ENCODE measurements at regions of chr22 and their contacts with region 1.

Region 1: GRCh38 chr22:17171313-17172171 is 12.5 kb upstream of the HDHD5 start:
- DNase-seq: peak; percentile 74
- H3K4me3 ChIP-seq: peak overlapping the region; percentile 72
- H3K27ac ChIP-seq: peak overlapping the region; percentile 81
- H3K27me3 ChIP-seq: no peaks in the 10 kb centered on the region
- CTCF ChIP-seq: peak; percentile 93

Region 2: DNA sequence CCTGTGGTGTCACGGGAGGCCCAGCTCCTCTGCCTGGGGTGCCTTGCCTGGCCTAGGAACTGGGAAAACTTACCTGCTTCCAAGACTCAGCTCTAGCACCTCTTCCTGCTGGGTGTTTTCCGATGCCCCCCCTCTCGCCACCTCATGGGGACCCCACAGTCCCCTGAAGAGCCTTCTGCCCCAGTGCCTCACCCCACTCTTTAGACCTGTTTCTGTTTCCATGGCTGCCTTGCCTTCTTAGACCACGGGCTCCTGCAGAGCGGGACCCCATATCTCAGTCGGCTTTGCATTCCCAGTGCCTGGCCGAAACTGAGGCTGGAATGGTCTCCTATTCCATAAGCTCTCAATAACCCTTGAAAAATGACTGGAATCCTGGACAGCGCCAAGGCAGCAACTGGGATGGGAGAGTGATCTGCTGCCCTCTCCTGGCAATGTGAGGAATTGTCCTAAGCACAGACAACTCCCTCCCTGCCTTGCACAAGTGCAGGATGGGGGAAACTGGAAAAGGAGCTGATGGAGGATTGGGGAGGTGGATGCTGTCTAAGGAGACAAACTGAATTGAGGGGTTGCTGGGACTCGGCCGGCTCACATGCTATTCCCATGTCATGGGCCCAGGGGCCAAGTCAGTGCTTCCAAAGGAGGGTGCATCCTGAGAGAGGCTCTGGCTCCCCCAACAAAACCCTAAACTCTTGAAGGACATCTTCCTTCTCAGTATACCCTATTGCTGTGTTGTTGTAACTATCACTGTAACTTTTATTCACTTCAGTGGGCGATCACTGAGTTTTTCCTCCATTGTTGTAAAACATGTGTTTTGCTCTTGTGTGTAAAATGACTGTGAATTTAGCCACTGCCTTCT is 113.4 kb before region 1 on chr22:
- CTCF ChIA-PET with region 1: interaction called, 11 read pairs
- POLR2A ChIA-PET with region 1: interaction called, 3 read pairs
- DNase-seq: peak; percentile 46
- H3K4me3 ChIP-seq: no peak overlapping the region
- H3K27ac ChIP-seq: no peak overlapping the region
- H3K27me3 ChIP-seq: peaks cover 5% of the 10 kb centered on the region
- CTCF ChIP-seq: peak; percentile 97

Region 3: DNA sequence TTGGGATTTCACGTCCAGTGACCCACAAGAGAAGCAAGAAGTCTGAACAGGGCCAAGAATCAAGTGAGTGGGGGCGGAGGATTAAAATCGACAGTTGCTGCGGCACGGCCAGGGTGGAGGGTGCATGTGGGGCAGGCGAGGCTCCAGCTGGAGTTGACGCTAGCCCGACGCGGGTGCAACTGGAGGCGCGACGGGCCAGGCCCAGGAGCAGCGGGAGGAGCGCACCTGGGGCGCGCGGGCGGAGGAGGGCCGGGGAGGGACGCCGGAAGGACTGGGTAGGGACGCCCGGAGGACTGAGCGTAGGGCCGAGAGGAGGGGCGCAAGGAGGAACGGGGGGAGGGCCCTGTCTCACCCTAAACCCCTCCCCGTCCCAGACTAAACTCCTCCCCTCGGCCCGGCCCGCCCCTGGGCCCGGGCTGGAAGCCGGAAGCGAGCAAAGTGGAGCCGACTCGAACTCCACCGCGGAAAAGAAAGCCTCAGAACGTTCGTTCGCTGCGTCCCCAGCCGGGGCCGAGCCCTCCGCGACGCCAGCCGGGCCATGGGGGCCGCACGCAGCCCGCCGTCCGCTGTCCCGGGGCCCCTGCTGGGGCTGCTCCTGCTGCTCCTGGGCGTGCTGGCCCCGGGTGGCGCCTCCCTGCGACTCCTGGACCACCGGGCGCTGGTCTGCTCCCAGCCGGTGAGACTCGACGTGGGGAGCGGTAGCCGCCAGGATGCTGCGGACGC is 86.8 kb before region 1 on chr22 and contains the start of gene IL17RA:
- CTCF ChIA-PET with region 1: interaction called, 228 read pairs
- POLR2A ChIA-PET with region 1: interaction called, 3 read pairs
- DNase-seq: peak; percentile 44
- H3K4me3 ChIP-seq: peak within 1 kb of the TSS; percentile 79
- H3K27ac ChIP-seq: no peak within 1 kb of the TSS
- H3K27me3 ChIP-seq: no peaks in the 10 kb centered on the region
- CTCF ChIP-seq: no peak
- polyA plus RNA-seq, gene IL17RA: 20.3 and 22.3 TPM in 2 replicates

Region 4: DNA sequence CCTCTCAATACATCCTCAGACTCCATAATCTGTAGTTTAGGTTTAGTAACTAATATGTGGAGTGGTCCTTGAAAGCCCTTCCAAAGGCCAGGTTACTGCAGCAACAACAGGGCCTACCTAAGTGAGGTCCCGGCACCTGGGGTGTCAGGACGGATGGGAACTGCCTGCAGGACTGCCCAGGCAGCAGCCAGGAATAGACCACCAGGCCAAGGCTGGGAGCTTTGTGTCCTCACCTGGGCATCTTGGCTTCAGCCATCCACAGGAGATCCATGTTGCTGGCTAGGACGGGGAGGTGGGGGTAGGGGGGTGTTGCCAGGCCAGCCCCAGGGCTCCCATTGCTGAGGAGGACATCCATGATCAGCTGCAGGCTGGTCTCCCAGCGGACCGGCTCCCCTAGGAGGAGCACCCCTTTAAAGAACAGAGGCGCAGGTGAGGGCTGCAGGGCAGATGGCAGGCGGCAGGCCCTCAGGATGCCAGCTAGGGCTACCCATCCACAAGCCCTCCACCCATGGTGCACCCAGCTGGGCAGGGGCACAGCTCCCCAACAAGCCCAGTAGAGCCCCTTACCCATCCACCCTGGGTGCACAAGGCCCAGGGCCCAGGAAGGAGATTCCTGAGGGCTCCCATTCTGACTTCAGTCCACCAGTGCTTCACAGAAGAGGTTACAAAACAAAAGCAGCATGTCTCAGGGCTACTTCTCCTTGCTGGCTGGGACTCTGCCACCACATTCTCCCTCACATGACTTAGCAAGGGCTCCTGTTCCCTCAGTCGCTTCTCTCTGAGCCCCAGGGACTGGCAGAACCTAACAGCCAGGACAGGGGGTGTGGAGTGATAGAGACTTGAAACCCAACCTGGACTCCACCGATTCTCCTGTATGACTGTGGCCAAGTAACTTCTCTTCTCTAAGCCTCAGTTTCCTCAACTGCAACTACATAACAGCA is 30.4 kb before region 1 on chr22:
- CTCF ChIA-PET with region 1: interaction called, 26 read pairs
- POLR2A ChIA-PET with region 1: no interaction called
- DNase-seq: no peak
- H3K4me3 ChIP-seq: no peak overlapping the region
- H3K27ac ChIP-seq: no peak overlapping the region
- H3K27me3 ChIP-seq: no peaks in the 10 kb centered on the region
- CTCF ChIP-seq: no peak

Region 5: DNA sequence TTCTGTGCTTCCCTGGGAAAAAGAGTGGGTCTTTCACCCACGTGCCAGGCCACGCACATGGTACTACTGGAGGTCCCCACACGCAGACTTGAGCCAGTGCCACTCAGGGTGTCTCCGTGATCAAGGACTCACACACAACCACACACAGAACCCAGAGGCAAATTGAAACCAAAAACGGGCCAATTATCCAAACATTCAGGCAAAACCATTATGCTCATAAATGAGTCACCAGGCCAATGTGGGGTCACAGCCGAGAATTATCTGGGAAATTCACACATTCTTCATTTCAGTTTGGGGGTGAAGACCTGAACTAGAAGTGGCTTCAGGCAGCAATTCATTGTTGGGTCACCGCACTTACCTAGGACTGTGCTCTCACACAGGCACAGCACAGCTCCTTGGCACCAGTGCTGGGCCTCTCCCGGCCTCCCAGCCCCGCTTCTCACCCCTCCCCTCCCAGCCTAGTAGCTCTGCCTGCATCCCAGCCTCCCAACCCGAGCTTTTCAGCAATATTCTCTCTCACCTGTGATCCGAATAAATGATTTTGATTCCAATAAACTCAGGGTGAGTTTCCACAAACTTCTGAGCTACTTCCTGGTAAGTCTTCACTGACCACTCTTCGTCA is 19.7 kb after region 1 on chr22:
- CTCF ChIA-PET with region 1: interaction called, 100 read pairs
- POLR2A ChIA-PET with region 1: no interaction called
- DNase-seq: no peak
- H3K4me3 ChIP-seq: no peak overlapping the region
- H3K27ac ChIP-seq: no peak overlapping the region
- H3K27me3 ChIP-seq: no peaks in the 10 kb centered on the region
- CTCF ChIP-seq: no peak

Region 6: DNA sequence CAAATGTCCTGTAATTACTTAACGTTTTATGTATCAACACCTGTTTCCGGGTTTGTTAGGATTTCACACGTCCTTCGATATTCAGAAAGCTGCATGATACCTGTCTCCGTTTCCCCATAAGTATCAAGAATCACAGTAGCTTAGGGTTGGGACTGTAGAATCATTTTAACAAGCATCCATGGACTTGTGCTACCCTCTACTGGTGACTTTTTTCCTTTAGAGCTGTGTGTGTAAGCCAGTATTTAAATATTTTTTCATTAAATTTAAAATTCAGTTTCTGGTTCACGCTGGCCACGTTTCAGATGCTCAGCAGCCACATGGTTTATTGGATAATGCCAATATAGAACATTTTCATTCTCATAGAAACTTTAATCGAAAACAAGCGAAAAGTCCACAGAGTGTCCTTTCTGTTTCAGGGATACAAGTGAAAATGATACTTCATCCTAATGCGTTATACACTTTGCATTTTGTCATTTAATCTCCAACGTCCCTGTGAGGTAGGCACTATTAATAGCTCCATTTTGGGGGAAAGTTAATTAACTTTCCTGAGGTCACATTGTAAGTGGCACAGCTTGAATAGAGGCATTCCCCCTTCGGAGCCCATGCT is 330.2 kb after region 1 on chr22:
- CTCF ChIA-PET with region 1: interaction called, 72 read pairs
- POLR2A ChIA-PET with region 1: interaction called, 7 read pairs
- DNase-seq: peak; percentile 27
- H3K4me3 ChIP-seq: no peak overlapping the region
- H3K27ac ChIP-seq: no peak overlapping the region
- H3K27me3 ChIP-seq: no peaks in the 10 kb centered on the region
- CTCF ChIP-seq: peak; percentile 69